KBM-7 (cell line): ENCODE measurements at regions of chr16 and their contacts with region 1.

Region 1: DNA sequence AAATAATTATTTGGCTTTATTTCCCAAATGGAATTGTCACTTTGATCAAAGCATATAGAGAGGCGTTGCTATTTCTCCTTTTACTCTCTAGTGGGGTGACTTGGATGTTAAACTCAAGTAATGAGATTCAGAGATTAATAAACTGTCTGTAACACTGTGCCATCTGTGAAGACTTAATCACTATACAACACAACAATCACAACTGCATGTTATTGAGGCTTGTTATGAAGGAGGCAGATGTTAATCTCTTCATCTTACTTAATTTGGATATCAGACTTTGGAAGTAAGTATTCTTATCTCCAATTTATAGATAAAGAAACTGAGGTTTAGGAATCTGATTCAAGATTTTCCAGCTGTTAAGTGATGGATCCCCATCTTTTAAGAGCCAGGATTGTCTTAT is 132.5 kb downstream of the CNTNAP4 start:
- DNase-seq: no peak

Region 2: GRCh38 chr16:76309639-76310335 is 99.9 kb before region 1 on chr16:
- in situ Hi-C with region 1: loop called (anchors 25 kb)
- DNase-seq: no peak